ENCODE measurements at regions of chr1 and their contacts with region 1.

Region 1: DNA sequence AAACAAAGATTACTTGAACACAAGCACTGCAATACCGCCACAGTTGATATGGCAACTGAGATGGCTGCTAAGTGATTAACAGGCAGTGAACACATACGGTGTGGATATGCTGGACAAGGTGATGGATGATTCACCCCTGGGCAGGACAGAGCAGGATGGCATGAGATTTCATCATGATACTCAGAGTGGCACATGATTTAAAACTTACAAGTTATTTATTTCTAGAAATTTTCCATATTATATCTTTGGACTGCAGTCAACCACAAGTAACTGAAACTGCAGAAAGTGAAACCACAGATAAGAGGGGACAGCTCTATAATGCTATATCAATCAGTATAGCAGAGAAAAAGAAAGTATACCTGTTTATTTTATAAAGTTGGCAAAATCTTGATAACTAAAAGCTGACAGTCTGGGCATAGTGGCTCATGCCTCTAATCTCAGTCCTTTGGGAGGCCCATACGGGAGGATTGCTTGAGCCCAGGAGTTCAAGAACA is 47.9 kb downstream of the PHACTR4 start:
- DNase-seq: peak; percentile 94
- H3K4me3 Mint-ChIP-seq: peak overlapping the region; percentile 47
- H3K27ac Mint-ChIP-seq: peak overlapping the region; percentile 89
- H3K4me1 Mint-ChIP-seq: peaks cover 13% of the 10 kb centered on the region
- H3K27me3 Mint-ChIP-seq: no peaks in the 10 kb centered on the region
- CTCF ChIP-seq: no peak

Region 2: DNA sequence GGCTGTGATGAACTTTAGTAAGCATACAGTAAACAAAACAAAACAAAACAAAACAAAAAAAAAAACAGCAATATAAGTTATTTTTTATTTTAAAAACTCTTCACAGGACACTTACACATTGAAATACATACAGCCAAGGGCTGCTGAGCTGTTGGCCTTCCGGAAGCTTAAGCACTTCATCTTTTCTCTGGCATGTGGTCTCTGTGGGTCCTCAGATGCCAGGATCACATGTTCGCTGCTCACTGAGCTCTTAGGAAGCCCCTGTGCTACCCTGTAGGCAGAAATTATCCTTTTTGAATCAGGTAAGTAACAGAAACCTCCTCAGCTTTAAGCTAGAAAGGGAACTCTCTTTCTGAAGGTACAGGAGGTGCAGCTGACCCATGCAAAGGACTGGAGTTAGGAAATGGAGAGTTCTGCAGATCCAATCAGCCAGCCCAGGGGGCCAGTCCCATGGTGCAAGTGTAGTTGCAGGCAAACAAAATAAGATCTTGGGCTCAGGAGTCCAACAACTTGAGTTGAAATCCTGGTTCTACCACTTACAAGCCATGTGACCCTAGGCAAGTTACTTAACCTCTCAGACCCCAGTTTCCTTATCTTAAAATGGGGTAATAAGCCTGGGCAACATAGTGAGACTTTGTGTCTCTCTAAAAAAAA is 111.0 kb before region 1 on chr1:
- CTCF ChIA-PET with region 1: no interaction called
- POLR2A ChIA-PET with region 1: no interaction called
- intact Hi-C with region 1: no loop called
- DNase-seq: no peak
- H3K4me3 Mint-ChIP-seq: no peak overlapping the region
- H3K27ac Mint-ChIP-seq: no peak overlapping the region
- H3K4me1 Mint-ChIP-seq: no peaks in the 10 kb centered on the region
- H3K27me3 Mint-ChIP-seq: no peaks in the 10 kb centered on the region
- CTCF ChIP-seq: no peak

Region 3: GRCh38 chr1:28437934-28438699 is 20.6 kb after region 1 on chr1:
- CTCF ChIA-PET with region 1: interaction called, 5 read pairs
- POLR2A ChIA-PET with region 1: interaction called, 52 read pairs
- intact Hi-C with region 1: loop called (anchors 1 kb)
- DNase-seq: peak; percentile 98
- H3K4me3 Mint-ChIP-seq: peak overlapping the region; percentile 89
- H3K27ac Mint-ChIP-seq: peak overlapping the region; percentile 93
- H3K4me1 Mint-ChIP-seq: peaks cover 21% of the 10 kb centered on the region
- H3K27me3 Mint-ChIP-seq: no peaks in the 10 kb centered on the region
- CTCF ChIP-seq: no peak

Region 4: GRCh38 chr1:28449904-28450303 is 32.4 kb after region 1 on chr1:
- CTCF ChIA-PET with region 1: interaction called, 3 read pairs
- POLR2A ChIA-PET with region 1: interaction called, 12 read pairs
- intact Hi-C with region 1: no loop called
- DNase-seq: peak; percentile 94
- H3K4me3 Mint-ChIP-seq: peak overlapping the region; percentile 40
- H3K27ac Mint-ChIP-seq: peak overlapping the region; percentile 79
- H3K4me1 Mint-ChIP-seq: peaks cover 13% of the 10 kb centered on the region
- H3K27me3 Mint-ChIP-seq: no peaks in the 10 kb centered on the region
- CTCF ChIP-seq: no peak

Region 5: GRCh38 chr1:28510665-28511440 is 93.4 kb after region 1 on chr1:
- CTCF ChIA-PET with region 1: interaction called, 3 read pairs
- POLR2A ChIA-PET with region 1: interaction called, 74 read pairs
- intact Hi-C with region 1: no loop called
- DNase-seq: peak; percentile 68
- H3K4me3 Mint-ChIP-seq: peak overlapping the region; percentile 95
- H3K27ac Mint-ChIP-seq: peak overlapping the region; percentile 98
- H3K4me1 Mint-ChIP-seq: peaks cover 25% of the 10 kb centered on the region
- H3K27me3 Mint-ChIP-seq: no peaks in the 10 kb centered on the region
- CTCF ChIP-seq: no peak